Left colon (tissue), 2 donors: ENCODE measurements at regions of chr2 and their contacts with region 1.

Region 1: DNA sequence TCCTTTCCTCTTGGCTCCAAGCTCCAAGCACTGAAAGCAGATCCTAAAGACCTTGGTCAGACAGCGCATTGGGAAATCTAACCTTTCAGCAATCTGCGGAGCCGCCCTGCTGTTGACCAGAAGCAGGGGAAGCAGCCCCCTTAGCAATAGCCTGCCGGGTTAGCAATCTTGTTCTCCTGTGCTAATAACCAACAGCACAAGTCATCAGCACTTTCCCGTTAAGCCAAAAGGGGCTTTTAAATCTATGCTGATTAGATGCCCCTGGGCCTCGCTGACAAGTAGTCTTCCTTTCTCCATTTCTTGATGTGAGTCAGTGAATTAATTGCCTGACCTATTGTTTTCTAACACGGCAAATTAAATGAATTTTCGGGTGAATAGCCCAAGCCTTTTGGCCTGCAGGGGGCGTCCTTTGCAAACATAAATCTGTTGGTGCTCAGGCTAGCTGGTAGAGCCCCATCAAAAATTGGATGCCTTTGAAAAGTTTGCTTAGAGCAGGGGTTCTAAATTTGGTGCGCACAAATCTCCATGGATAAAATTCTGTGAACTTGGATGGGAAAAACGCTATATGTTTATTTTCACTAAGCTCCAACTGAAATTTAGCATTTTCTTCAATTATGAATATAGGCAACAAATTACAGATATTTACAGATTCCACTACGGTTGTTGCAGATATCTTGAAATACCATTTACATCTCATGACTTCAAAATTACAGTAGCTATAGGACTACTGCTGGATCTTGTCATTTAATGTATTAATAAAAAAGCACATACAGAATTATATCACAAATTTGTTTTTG is 24.6 kb downstream of the MAIP1 start:
- DNase-seq: peak; percentile 66 to 95
- ATAC-seq: peak; percentile 49

Region 2: DNA sequence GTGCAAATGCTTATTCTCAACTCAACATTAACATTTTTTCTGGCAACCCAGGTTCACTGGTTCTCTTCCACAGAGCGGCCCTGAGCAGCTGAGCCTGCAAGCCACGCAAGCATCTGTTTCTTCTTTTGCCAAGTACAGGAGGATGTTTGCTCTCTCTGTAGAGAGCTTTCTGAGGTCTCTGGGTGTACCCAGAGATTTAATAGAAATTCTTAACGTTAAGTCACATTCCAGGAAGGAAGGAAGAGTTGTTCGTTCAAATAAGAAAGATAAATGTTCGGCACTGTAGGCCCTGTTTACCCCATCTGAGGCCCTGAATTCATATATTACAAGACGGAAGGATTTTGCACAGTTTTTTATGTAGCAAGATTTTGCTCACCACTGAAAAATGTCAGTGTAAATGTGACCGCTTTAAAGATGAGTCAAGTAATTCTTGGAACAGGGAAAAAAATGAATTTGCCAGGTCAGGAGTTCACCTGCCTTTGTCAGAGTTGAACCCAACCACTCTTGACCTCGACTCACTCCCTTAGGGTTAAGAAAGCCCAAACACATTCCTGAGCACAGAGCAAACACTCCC is 499.7 kb after region 1 on chr2:
- intact Hi-C with region 1: loop called (anchors 2 to 10 kb)
- DNase-seq: no peak
- ATAC-seq: no peak